HCT116 (cell line): ENCODE measurements at regions of chr22 and their contacts with region 1.

Region 1: DNA sequence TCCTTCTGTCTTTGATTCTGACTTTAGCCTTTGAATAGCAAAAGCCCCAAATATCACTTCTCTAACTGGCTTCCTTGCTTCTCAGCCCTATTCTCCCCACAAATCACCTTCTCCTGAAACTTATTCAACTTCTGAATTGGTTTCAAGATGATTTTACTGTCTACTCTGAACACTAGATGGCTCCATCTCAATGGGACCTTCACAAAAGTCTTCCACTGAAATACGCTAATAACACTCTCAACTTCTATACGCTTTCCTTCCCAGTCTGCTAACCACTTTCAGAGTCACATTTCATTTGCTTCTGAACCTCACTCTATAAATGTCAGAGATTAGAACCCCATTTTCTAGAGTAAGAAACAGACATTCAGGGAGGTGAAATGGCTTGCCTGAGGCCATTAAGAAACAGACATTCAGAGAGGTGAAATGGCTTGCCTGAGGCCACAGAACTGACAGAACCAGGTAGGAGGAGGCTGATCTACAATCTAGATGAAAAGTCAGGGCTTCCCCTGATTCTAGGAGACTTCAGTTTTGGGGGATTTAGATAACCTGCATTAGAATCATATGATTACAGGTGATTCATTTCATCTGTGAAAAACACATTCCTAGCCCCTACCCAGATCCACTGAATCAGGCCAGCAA is 20.6 kb downstream of the MORC2 start:
- DNase-seq: peak; percentile 16
- ATAC-seq: peak; percentile 50; the same call in 1 of the 2 replicates
- H3K4me3 ChIP-seq: no peak overlapping the region
- H3K27ac ChIP-seq: no peak overlapping the region
- H3K4me1 ChIP-seq: no peaks in the 10 kb centered on the region
- H3K27me3 ChIP-seq: no peaks in the 10 kb centered on the region
- CTCF ChIP-seq: peak; percentile 52 to 66 (median 66); a peak in 5 of 6 replicates
- POLR2A ChIP-seq: no peak
- RAD21 ChIP-seq: peak; percentile 73

Region 2: GRCh38 chr22:31148953-31149627 is 201.2 kb after region 1 on chr22:
- CTCF ChIA-PET with region 1: no interaction called
- POLR2A ChIA-PET with region 1: no interaction called
- RAD21 ChIA-PET with region 1: no interaction called
- intact Hi-C with region 1: loop called (anchors 1 kb)
- DNase-seq: peak; percentile 66
- ATAC-seq: peak; percentile 96
- H3K4me3 ChIP-seq: no peak overlapping the region
- H3K27ac ChIP-seq: no peak overlapping the region
- H3K4me1 ChIP-seq: peaks cover 0 to 15% of the 10 kb centered on the region in 2 experiments; a peak in 2 of 4 replicates
- H3K27me3 ChIP-seq: no peaks in the 10 kb centered on the region
- CTCF ChIP-seq: peak; percentile 90 to 99 (median 93)
- POLR2A ChIP-seq: no peak
- RAD21 ChIP-seq: peak; percentile 96

Region 3: GRCh38 chr22:31230871-31231621 is 283.1 kb after region 1 on chr22:
- CTCF ChIA-PET with region 1: no interaction called
- POLR2A ChIA-PET with region 1: no interaction called
- RAD21 ChIA-PET with region 1: no interaction called
- intact Hi-C with region 1: loop called (anchors 2 kb)
- DNase-seq: no peak
- ATAC-seq: peak; percentile 67
- H3K4me3 ChIP-seq: no peak overlapping the region
- H3K27ac ChIP-seq: no peak overlapping the region
- H3K4me1 ChIP-seq: peaks cover 0 to 5% of the 10 kb centered on the region in 2 experiments; a peak in 1 of 4 replicates
- H3K27me3 ChIP-seq: no peaks in the 10 kb centered on the region
- CTCF ChIP-seq: peak; percentile 34 to 45 (median 43); a peak in 4 of 6 replicates
- POLR2A ChIP-seq: no peak
- RAD21 ChIP-seq: peak; percentile 67